ENCODE measurements at regions of chr15 and their contacts with region 1.

Region 1: DNA sequence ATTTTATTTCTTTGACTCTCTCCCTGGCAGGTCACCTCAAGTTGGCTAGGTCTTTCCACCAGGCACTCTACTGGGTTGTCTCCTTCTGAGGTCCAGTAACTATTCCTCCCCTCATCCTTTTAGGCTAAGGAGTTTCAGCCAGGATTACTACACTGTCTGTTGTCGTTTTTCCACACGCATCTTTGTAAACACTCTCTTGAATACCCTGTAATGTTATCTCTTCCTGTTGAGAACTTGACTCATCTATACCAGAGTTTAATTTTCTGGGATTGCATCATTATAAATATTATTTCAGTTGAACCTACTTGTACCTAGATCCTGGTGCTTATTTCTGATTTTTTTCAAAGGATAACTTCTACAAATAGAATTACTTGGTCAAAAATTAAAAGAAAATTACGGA is 138.3 kb downstream of the SQOR start:
- DNase-seq: peak; percentile 4
- H3K4me3 ChIP-seq: no peak overlapping the region
- H3K27ac ChIP-seq: no peak overlapping the region
- H3K4me1 ChIP-seq: no peaks in the 10 kb centered on the region
- H3K27me3 ChIP-seq: peaks cover 1% of the 10 kb centered on the region
- CTCF ChIP-seq: no peak

Region 2: DNA sequence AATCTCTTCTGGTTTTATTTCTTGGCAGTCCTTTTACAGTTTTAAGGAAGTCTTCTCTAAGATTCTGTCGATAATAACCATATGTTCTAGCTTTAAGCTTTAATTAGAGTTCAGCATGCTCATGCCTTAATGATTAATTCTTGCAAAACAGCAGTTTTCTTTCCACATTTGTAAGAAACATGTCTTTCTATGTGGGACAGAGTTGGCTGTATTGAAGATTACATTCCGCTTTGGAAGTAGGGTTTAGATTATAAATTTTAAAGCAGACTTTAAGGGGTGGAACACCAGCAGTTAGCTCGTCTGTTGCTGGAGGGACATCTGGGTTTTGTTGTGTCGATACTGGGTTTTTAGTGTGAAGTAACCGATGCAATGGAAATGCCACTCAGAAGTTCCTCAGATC is 103.1 kb before region 1 on chr15:
- CTCF ChIA-PET with region 1: no interaction called
- dilution Hi-C with region 1: loop called (anchors 5 kb)
- in situ Hi-C with region 1: no loop called
- intact Hi-C with region 1: no loop called
- DNase-seq: no peak
- H3K4me3 ChIP-seq: no peak overlapping the region
- H3K27ac ChIP-seq: no peak overlapping the region
- H3K4me1 ChIP-seq: no peaks in the 10 kb centered on the region
- H3K27me3 ChIP-seq: no peaks in the 10 kb centered on the region
- CTCF ChIP-seq: no peak

Measured in mammary epithelial cell (primary cell).